WTC11 (cell line): ENCODE measurements at regions of chr12 and their contacts with region 1.

Region 1: DNA sequence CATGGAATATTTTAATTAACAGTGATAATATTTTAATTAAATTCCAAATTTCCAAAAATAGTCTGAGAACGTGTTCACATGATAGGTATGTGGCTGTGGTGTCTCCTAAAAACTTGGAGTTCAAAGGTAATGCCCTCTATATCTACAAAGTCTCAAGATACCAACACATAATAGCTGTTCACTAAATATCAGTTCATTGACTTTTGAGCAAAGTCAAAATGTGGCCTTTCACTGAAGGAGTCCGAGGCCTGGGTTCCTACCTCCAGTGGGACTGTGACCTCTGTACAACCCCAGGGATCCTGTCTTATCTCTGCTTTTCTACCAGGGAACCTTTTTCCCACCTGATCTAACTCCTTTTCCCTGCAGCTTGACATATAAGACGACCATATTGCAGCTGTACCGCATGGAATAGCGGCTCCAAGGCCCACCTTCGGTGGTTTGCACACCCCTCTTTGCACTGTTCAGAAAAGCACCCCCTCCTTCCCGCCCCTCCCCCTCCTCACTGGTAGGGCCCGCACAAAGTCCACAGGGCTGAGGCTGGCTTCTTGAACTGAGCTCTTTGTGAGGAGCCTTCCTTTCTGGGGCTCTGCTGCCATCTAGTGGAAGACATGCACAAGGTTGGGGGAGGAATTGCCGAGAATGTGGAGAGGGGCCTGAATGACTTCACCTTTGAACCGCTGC is 3.1 kb downstream of the CCND2 start:
- DNase-seq: peak; percentile 91
- ATAC-seq: peak; percentile 50
- H3K4me3 Mint-ChIP-seq: peak overlapping the region; percentile 91
- H3K27ac Mint-ChIP-seq: peak overlapping the region; percentile 92
- H3K4me1 Mint-ChIP-seq: peaks cover 61% of the 10 kb centered on the region
- H3K27me3 Mint-ChIP-seq: peaks cover 5% of the 10 kb centered on the region; the same call in 1 of the 2 replicates
- CTCF ChIP-seq: peak; percentile 90

Region 2: DNA sequence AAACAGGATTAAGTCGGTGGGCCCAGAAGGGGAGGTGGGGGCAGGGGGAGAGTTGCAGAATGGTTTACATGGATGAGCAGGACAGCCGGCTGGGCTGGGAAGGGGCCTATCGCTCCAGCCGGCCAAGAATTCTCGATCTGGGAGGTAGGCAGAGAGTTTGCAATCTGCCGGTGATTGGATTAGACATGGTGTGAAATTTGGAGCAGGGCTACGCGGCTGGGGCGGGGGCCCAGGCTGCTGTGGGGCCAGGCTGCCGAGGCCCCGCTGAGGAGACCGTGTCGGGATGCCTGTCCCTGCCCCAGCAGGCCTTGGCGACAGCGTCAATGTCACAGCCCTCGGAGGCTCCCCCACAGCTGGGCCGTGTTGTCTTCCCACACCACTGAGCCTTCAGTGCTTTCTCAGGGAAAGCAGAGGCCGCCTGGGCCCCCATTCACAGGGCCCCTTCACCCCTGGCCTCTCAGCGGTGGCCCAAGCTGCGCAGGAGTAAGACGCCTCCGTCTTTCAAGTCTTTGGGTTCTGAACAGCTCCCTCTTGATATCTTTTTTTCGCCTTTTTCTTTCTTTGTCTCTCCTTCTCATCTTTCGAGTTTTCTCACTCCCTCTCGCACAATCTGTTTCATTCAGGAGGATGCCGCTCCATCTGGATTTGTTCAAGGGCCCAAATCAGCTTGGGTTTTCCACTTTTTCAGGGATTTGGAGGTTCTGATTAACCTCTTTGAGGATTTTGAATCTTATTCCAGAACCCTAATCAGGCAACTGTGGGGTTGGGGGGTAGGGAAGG is 286.0 kb before region 1 on chr12:
- CTCF ChIA-PET with region 1: interaction called, 18 read pairs
- POLR2A ChIA-PET with region 1: no interaction called
- DNase-seq: no peak
- ATAC-seq: no peak
- H3K4me3 Mint-ChIP-seq: no peak overlapping the region
- H3K27ac Mint-ChIP-seq: no peak overlapping the region
- H3K4me1 Mint-ChIP-seq: peaks cover 6% of the 10 kb centered on the region; the same call in 1 of the 2 replicates
- H3K27me3 Mint-ChIP-seq: peaks cover 4% of the 10 kb centered on the region; the same call in 1 of the 2 replicates
- CTCF ChIP-seq: no peak

Region 3: GRCh38 chr12:4030929-4031702 is 245.5 kb before region 1 on chr12:
- CTCF ChIA-PET with region 1: interaction called, 21 read pairs
- POLR2A ChIA-PET with region 1: interaction called, 12 read pairs
- DNase-seq: peak; percentile 91
- ATAC-seq: peak; percentile 86
- H3K4me3 Mint-ChIP-seq: peak overlapping the region; percentile 43
- H3K27ac Mint-ChIP-seq: peak overlapping the region; percentile 52
- H3K4me1 Mint-ChIP-seq: peaks cover 64% of the 10 kb centered on the region
- H3K27me3 Mint-ChIP-seq: peaks cover 38% of the 10 kb centered on the region
- CTCF ChIP-seq: no peak

Region 4: GRCh38 chr12:4118017-4118510 is 158.6 kb before region 1 on chr12:
- CTCF ChIA-PET with region 1: interaction called, 38 read pairs
- POLR2A ChIA-PET with region 1: interaction called, 10 read pairs
- DNase-seq: no peak
- ATAC-seq: no peak
- H3K4me3 Mint-ChIP-seq: no peak overlapping the region
- H3K27ac Mint-ChIP-seq: no peak overlapping the region
- H3K4me1 Mint-ChIP-seq: peaks cover 33% of the 10 kb centered on the region
- H3K27me3 Mint-ChIP-seq: no peaks in the 10 kb centered on the region
- CTCF ChIP-seq: no peak

Region 5: GRCh38 chr12:4203772-4204376 is 72.8 kb before region 1 on chr12:
- CTCF ChIA-PET with region 1: interaction called, 18 read pairs
- POLR2A ChIA-PET with region 1: interaction called, 9 read pairs
- DNase-seq: no peak
- ATAC-seq: peak; percentile 94
- H3K4me3 Mint-ChIP-seq: peak overlapping the region; percentile 51
- H3K27ac Mint-ChIP-seq: peak overlapping the region; percentile 57
- H3K4me1 Mint-ChIP-seq: peaks cover 70% of the 10 kb centered on the region
- H3K27me3 Mint-ChIP-seq: no peaks in the 10 kb centered on the region
- CTCF ChIP-seq: no peak

Region 6: DNA sequence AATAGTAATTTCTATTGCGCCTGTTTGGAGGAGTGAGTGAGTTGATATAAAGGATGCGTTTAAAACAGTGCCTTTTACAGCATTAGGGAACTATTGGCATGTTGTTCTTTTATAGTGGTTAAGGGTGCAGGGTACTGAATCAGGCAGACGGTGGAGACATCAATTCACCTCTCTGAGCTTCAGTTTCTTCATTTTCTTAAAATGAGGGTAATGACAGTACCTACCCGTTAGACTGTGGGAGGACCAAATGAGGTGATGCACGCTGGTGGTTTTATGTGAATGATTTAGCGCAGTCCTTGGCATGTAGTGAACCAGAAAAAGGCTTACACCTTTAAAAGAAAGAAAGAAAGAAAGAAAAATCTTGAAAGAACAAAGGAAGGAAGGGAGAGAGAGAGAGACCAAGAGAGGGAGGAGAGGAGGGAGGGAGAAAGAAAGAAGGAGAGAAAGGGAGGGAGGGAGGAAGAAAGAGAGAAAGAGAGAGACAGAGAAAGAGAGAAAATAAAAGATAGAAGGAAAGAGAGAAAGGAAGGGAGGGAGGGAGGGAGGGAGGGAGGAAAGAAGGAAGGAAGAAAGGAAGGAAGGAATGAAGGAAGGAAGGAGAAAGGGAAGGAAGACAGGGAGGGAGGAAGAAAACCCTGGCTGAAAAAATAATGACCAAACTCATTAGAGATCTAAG is 25.3 kb before region 1 on chr12:
- CTCF ChIA-PET with region 1: interaction called, 10 read pairs
- POLR2A ChIA-PET with region 1: interaction called, 3 read pairs
- DNase-seq: no peak
- ATAC-seq: no peak
- H3K4me3 Mint-ChIP-seq: no peak overlapping the region
- H3K27ac Mint-ChIP-seq: peak overlapping the region; percentile 67; the same call in 1 of the 2 replicates
- H3K4me1 Mint-ChIP-seq: peaks cover 26% of the 10 kb centered on the region
- H3K27me3 Mint-ChIP-seq: peaks cover 4% of the 10 kb centered on the region; the same call in 1 of the 2 replicates
- CTCF ChIP-seq: no peak

Region 7: GRCh38 chr12:4496145-4496838 is 219.6 kb after region 1 on chr12:
- CTCF ChIA-PET with region 1: no interaction called
- POLR2A ChIA-PET with region 1: no interaction called
- DNase-seq: no peak
- ATAC-seq: no peak
- H3K4me3 Mint-ChIP-seq: no peak overlapping the region
- H3K27ac Mint-ChIP-seq: no peak overlapping the region
- H3K4me1 Mint-ChIP-seq: no peaks in the 10 kb centered on the region
- H3K27me3 Mint-ChIP-seq: no peaks in the 10 kb centered on the region
- CTCF ChIP-seq: no peak